GM12878 (cell line): ENCODE measurements at regions of chr1 and their contacts with region 1.

Region 1: GRCh38 chr1:43414634-43415223 is 25.0 kb downstream of the SZT2 start:
- DNase-seq: no peak
- ATAC-seq: peak; percentile 90
- H3K4me3 ChIP-seq: no peak overlapping the region
- H3K27ac ChIP-seq: no peak overlapping the region
- H3K4me1 ChIP-seq: peaks cover 7% of the 10 kb centered on the region
- H3K27me3 ChIP-seq: no peaks in the 10 kb centered on the region
- CTCF ChIP-seq: peak; percentile 54 to 57 (median 55)
- EP300 ChIP-seq: no peak
- POLR2A ChIP-seq: no peak
- RAD21 ChIP-seq: peak; percentile 67

Region 2: GRCh38 chr1:43358746-43359693 is 55.7 kb before region 1 on chr1 and contains the start of gene CDC20:
- CTCF ChIA-PET with region 1: interaction called, 3 read pairs
- POLR2A ChIA-PET with region 1: no interaction called
- RAD21 ChIA-PET with region 1: interaction called, 10 read pairs
- SMC1A ChIA-PET with region 1: interaction called, 8 read pairs
- in situ Hi-C with region 1: no loop called
- intact Hi-C with region 1: no loop called
- DNase-seq: peak; percentile 89
- ATAC-seq: peak; percentile 98
- H3K4me3 ChIP-seq: peak within 1 kb of the TSS; percentile 92
- H3K27ac ChIP-seq: peak within 1 kb of the TSS; percentile 87
- H3K4me1 ChIP-seq: peaks cover 10% of the 10 kb centered on the region
- H3K27me3 ChIP-seq: no peaks in the 10 kb centered on the region
- CTCF ChIP-seq: no peak
- EP300 ChIP-seq: no peak
- POLR2A ChIP-seq: peak; percentile 91
- RAD21 ChIP-seq: no peak
- polyA plus RNA-seq, gene CDC20: 36.3 to 63.1 TPM